ENCODE measurements at regions of chr16 and their contacts with region 1.

Region 1: GRCh38 chr16:72995151-72995881 is 52.6 kb downstream of the ZFHX3 start:
- DNase-seq: no peak
- ATAC-seq: no peak
- H3K4me3 ChIP-seq: no peak overlapping the region
- H3K27ac ChIP-seq: no peak overlapping the region
- H3K4me1 ChIP-seq: peaks cover 35% of the 10 kb centered on the region
- H3K27me3 ChIP-seq: no peaks in the 10 kb centered on the region

Region 2: GRCh38 chr16:73032541-73033267 is 37.4 kb after region 1 on chr16:
- intact Hi-C with region 1: loop called in 1 of 4 experiments (anchors 5 kb)
- DNase-seq: no peak
- ATAC-seq: no peak
- H3K4me3 ChIP-seq: no peak overlapping the region
- H3K27ac ChIP-seq: no peak overlapping the region
- H3K4me1 ChIP-seq: peaks cover 23% of the 10 kb centered on the region
- H3K27me3 ChIP-seq: no peaks in the 10 kb centered on the region